ENCODE measurements at regions of chr2 and their contacts with region 1.

Region 1: DNA sequence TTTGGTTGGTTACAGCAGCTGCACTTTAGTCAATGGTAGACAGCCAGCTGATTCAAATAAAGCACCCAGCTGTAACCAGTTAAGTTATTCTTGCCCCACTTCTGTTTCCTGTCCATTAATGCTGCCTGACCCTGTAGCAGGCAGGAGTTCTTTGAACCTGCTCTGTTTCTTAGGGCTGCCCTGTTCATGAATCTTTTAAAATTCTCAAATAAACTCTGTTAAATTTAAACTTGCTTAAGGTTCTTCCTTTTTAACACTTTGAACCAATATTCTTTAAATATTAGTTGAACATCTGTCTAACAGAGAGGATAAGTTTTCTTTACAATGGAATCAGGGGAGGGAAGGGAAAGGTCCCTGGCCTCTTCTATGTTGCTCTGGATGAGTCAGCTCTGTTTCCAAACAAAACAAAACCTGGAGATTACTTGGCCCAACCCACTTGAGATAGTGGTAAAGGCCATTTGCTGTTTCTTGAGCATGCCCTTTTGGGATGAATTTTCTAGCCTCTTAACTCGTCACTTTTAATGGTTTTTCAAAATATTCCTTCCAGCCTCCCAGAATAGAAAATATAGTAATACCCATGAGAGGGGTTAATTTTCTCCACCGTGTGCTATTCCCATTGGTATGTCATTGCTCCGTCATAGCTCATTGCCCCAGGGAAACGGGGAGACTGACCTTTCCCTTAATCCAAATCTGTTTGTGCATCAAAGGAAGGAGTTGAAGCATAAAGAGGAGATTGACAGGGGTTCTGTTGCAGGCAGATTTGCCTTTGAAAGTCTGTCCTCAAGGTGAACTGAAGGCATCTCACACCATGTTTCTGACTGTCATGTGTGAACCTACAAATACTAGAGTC is 112.1 kb upstream of the FHL2 start:
- DNase-seq: no peak
- ATAC-seq: peak in 3 of 8 donors; percentile 22 to 62 (median 38)
- H3K4me3 ChIP-seq: no peak overlapping the region
- H3K27ac ChIP-seq: peak overlapping the region; percentile 5 to 76 (median 57)
- H3K4me1 ChIP-seq: peaks cover 0 to 46% (median 20%) of the 10 kb centered on the region in 9 donors
- H3K27me3 ChIP-seq: no peaks in the 10 kb centered on the region
- CTCF ChIP-seq: no peak

Region 2: DNA sequence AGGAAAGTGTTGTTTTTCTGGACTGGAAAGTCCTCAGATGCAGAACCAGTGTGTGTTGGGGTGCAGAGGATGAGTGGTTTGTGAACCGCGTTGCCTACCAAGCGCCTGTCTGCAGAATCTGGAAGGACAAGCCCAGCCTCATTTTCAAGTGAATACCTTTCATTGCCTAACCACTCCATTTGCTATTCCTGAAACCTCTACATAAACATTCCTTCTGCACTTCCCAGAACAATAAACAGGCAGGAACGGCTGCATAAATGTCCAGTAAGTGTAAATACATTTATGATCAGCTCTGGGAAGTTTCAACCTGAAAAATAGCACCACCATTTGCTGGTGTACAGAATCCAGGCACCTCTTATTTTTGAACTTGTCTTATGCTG is 66.8 kb before region 1 on chr2:
- intact Hi-C with region 1: loop called in 5 of 10 experiments (anchors 2 to 10 kb)
- DNase-seq: no peak
- ATAC-seq: peak in 1 of 8 donors; percentile 5
- H3K4me3 ChIP-seq: no peak overlapping the region
- H3K27ac ChIP-seq: no peak overlapping the region
- H3K4me1 ChIP-seq: peaks cover 0 to 14% (median 2%) of the 10 kb centered on the region in 9 donors
- H3K27me3 ChIP-seq: peaks cover 0 to 3% (median 0%) of the 10 kb centered on the region in 7 donors
- CTCF ChIP-seq: no peak

Region 3: DNA sequence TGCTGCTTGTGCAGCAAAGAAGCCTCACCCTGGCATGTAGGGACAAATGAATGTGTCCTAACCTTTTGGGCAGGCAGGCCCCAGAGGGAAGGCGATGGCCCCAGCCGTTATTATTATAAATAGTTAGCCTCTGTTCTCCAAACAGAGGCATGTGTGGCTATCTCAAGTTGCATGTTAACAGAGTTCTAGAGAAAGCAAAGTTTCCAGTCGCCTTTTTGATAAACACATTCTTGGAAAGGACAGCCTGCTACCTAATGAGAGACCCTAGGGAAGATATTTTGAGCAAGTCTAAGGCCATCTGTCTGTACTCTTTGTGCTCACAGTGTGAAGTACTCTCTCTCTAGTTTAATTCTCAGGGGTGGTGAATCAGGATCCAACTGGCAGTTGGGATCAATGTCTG is 14.7 kb before region 1 on chr2:
- intact Hi-C with region 1: loop called in 2 of 10 experiments (anchors 1 to 2 kb)
- DNase-seq: peak in 1 of 2 donors; percentile 48
- ATAC-seq: peak; percentile 22 to 85 (median 80)
- H3K4me3 ChIP-seq: no peak overlapping the region
- H3K27ac ChIP-seq: peak overlapping the region; percentile 68 to 94 (median 88)
- H3K4me1 ChIP-seq: peaks cover 0 to 55% (median 43%) of the 10 kb centered on the region in 9 donors
- H3K27me3 ChIP-seq: no peaks in the 10 kb centered on the region
- CTCF ChIP-seq: no peak